ENCODE measurements at regions of chr3 and their contacts with region 1.

Region 1: GRCh38 chr3:106392915-106393314 is 524.1 kb upstream of the CBLB start:
- DNase-seq: no peak
- CTCF ChIP-seq: no peak

Region 2: GRCh38 chr3:106299300-106300098 is 93.4 kb before region 1 on chr3:
- CTCF ChIA-PET with region 1: no interaction called
- POLR2A ChIA-PET with region 1: no interaction called
- DNase-seq: peak; percentile 15
- CTCF ChIP-seq: no peak

Region 3: DNA sequence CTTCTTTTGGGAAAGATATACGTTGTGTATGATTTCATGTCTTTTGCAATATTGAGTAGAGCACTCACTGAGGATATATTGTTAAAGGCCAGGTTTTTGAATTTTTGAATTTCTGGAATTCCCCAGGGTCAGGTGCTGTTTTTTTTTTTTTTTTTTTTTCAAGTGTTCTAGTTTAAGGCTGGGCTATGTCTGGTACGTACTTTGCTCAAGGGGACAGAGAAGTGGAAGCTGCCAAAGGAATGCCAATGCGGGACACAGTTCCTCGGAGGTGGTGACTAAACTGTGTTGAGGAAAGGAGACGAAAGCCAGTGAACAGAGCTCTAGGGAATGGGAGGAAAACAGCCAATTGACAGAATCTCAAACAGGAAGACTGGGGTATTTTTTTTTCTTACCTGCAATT is 13.6 kb before region 1 on chr3:
- CTCF ChIA-PET with region 1: interaction called, 10 read pairs
- POLR2A ChIA-PET with region 1: no interaction called
- DNase-seq: no peak
- CTCF ChIP-seq: no peak

Region 4: DNA sequence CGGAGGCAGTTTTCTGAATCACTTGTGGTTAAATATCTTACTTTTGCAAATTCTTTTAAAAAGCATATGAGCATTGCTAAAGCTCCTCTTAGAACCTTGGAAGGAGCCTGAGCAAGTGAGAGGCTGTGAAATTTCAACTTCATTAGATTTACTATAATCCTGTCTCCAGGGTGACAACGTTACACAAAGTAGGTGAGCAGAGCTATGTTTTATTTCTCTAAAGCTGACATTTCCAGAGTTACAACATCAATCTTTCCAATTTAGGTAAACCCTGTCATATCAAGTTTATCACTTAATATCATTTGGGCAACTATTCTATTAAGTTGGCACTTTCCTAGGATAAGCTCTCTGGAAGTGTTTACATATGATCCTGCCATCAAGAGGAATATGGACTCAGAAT is 20.8 kb after region 1 on chr3:
- CTCF ChIA-PET with region 1: interaction called, 11 read pairs
- POLR2A ChIA-PET with region 1: interaction called, 3 read pairs
- DNase-seq: no peak
- CTCF ChIP-seq: no peak

Measured in GM10248 (cell line).